ENCODE measurements at regions of chr2 and their contacts with region 1.

Region 1: DNA sequence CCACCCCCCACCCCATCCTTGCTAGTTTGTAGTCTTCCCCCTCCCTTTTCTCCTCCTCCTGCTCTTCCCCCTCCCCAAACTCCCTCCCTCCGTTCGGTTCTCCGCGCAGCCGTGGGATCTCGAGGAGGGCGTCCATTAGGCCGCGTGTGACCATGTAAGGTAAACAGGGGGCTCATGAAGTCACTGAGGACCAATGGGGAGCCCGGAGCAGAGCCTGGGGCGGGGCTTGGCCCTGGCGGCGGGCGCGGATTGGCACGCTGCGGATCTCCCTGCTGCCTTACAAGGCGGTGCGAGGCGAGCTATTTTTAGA is 246 bp upstream of the KLF7 start:
- DNase-seq: peak; percentile 99
- H3K4me3 ChIP-seq: peak overlapping the region; percentile 83
- H3K27ac ChIP-seq: peak overlapping the region; percentile 100
- H3K4me1 ChIP-seq: peaks cover 20% of the 10 kb centered on the region
- H3K27me3 ChIP-seq: no peaks in the 10 kb centered on the region
- CTCF ChIP-seq: no peak

Region 2: DNA sequence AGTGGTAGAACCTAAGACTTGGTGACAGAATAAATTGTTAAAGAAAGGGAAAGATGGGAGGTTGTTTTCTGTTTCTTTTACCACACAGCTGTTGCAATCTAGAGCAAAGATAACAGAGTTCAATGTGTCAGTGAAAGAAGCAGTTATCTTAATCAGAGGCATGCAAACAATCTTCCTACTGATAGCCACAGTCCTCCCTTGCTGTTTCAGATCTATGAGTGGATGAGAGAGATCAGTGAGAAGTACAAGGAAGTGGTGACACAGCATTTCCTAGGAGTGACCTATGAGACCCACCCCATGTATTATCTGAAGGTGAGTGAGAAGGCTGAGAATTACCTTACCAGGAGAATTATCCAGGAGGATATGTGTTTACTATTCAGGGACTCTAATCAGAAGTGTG is 210.7 kb before region 1 on chr2:
- CTCF ChIA-PET with region 1: no interaction called
- POLR2A ChIA-PET with region 1: no interaction called
- intact Hi-C with region 1: no loop called
- DNase-seq: no peak
- H3K4me3 ChIP-seq: no peak overlapping the region
- H3K27ac ChIP-seq: no peak overlapping the region
- H3K4me1 ChIP-seq: no peaks in the 10 kb centered on the region
- H3K27me3 ChIP-seq: no peaks in the 10 kb centered on the region
- CTCF ChIP-seq: no peak

Region 3: DNA sequence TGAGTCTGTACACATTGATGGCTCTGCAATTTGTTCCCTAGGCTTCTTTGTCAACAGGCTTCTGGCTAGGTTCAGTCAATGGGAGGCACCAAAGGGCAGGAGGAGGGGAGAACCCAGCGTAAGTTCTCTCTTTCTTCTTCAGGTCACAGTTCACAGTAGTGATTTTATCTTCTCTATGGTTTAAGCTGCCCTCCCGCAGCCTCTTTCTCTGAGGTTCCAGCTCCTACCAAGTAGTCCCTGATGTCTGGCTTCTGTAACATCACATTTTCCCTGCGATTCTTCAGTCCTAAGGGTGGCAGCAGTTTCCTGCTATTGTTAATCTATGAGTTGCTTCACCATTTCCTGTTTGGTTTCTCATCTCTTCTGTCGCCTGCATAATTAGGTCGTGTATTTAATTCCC is 119.3 kb before region 1 on chr2:
- CTCF ChIA-PET with region 1: no interaction called
- POLR2A ChIA-PET with region 1: no interaction called
- intact Hi-C with region 1: loop called (anchors 2 kb)
- DNase-seq: peak; percentile 88
- H3K4me3 ChIP-seq: no peak overlapping the region
- H3K27ac ChIP-seq: no peak overlapping the region
- H3K4me1 ChIP-seq: peaks cover 12% of the 10 kb centered on the region
- H3K27me3 ChIP-seq: no peaks in the 10 kb centered on the region
- CTCF ChIP-seq: peak; percentile 62

Region 4: GRCh38 chr2:207073801-207074678 is 92.0 kb before region 1 on chr2:
- CTCF ChIA-PET with region 1: no interaction called
- POLR2A ChIA-PET with region 1: no interaction called
- intact Hi-C with region 1: loop called (anchors 10 kb)
- DNase-seq: peak; percentile 62
- H3K4me3 ChIP-seq: no peak overlapping the region
- H3K27ac ChIP-seq: peak overlapping the region; percentile 32
- H3K4me1 ChIP-seq: peaks cover 22% of the 10 kb centered on the region
- H3K27me3 ChIP-seq: no peaks in the 10 kb centered on the region
- CTCF ChIP-seq: peak; percentile 24; the same call in 1 of the 2 replicates